ENCODE measurements at regions of chr7 and their contacts with region 1.

Region 1: GRCh38 chr7:92590711-92591310 is 621 bp upstream of the FAM133B start:
- DNase-seq: no peak
- H3K4me3 Mint-ChIP-seq: peak overlapping the region; percentile 92
- H3K27ac Mint-ChIP-seq: no peak overlapping the region
- H3K4me1 Mint-ChIP-seq: peaks cover 37% of the 10 kb centered on the region
- H3K27me3 Mint-ChIP-seq: peaks cover 5% of the 10 kb centered on the region

Region 2: DNA sequence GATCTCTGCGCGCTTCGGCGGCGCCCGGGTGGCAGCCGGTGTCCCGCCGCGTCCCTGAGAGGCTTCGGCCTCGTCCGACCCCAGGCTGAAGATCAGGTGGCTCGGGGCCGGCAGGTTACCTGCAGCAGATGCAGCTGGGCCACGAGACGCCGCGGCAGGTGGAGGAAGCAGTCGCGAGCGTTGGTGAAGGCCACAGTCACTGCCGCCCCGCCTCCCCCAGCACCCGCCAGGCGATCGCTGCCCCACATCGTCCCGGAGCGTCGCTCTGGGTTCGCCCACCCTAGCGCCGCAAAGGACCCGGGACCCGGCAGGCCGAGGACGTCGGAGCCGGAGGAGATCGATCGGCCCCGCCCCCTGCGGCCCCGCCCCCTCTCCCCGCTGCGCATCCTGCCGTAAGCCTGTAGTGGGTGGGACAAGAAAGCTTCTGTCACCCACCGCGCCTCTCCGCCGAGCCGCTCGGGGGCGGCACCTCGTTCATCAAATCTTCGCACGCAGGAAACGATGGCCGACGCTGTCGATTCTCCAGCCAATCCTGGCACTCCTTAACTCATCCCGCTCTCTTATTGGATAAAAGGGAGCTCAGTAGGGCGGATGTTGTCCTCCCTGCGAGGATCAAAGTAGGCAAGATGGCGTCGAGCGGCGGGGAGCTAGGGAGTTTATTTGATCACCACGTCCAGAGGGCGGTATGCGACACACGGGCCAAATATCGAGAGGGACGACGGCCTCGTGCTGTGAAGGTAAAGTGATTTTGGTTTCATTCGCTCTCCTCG is 62.4 kb before region 1 on chr7 and contains the starts of genes PEX1 and RBM48:
- intact Hi-C with region 1: loop called (anchors 1 kb)
- DNase-seq: peak; percentile 94
- H3K4me3 Mint-ChIP-seq: peak within 1 kb of the TSS; percentile 91
- H3K27ac Mint-ChIP-seq: peak within 1 kb of the TSS; percentile 94
- H3K4me1 Mint-ChIP-seq: peaks cover 24% of the 10 kb centered on the region
- H3K27me3 Mint-ChIP-seq: no peaks in the 10 kb centered on the region
- total RNA-seq, gene PEX1: 14.7 and 17.0 TPM in 2 replicates
- total RNA-seq, gene RBM48: 17.2 and 17.6 TPM in 2 replicates

Region 3: GRCh38 chr7:92609921-92610518 is 19.2 kb after region 1 on chr7:
- intact Hi-C with region 1: loop called (anchors 1 kb)
- DNase-seq: no peak
- H3K4me3 Mint-ChIP-seq: no peak overlapping the region
- H3K27ac Mint-ChIP-seq: peak overlapping the region; percentile 36
- H3K4me1 Mint-ChIP-seq: peaks cover 46% of the 10 kb centered on the region
- H3K27me3 Mint-ChIP-seq: no peaks in the 10 kb centered on the region

Measured in activated T-helper 1 cell treated with anti-CD3 and anti-CD28 coated beads, Interleukin-12 subunit alpha, Interleukin-12 subunit beta, Interleukin-2, Interleukin-4 antibody, amounts not matched to agents 30 ng/mL and 10 ng/mL and 1 ng/mL, durations not matched to agents 14 hours and 24 hours and 36 hours (primary cell).